CD4-positive, alpha-beta T cell (primary cell): ENCODE measurements at regions of chr2 and their contacts with region 1.

Region 1: DNA sequence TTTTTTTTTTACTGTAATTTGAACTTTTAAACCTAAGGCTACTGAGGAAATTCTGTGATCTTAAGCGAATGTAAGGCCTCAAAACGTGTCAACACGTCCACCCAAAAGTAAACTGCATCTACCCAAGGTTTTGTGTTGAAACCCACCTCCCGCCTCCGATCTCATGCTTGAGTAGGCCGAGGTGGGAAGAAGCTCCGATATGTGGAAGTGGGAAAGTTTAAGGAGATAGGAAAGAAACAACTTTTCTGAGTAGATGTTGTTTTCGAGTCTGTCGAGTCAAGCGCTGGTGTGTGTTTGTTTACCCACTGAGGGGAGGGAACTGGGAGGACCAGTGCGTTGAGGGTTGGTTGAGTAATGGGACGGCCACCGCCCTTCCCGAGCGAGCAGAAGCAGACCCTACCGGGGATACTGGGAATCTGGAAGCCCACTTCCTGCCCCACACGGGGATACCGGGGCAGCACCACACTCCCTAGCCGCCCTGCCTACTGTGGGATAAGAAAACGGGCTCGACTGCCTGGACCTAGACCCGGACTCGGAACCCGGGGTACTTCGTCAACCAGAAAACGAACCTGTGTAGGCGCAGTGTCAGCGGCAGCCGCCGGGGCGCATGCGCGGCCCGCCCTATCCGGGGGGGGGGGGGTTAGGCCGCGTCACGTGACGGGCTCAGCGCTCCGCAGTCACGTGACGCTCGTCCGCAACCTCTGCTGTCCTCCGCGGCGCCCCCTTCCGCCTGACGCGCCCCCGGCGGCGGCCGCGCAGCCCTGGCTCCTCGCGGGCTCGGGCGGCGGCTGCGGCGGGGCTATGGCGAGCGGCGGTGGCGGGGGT is at the start of gene RETREG2:
- DNase-seq: peak; percentile 67 to 96 (median 78)
- ATAC-seq: peak; percentile 66
- H3K4me3 ChIP-seq: peak within 1 kb of the TSS; percentile 90
- H3K4me3 Mint-ChIP-seq: peak within 1 kb of the TSS; percentile 94
- H3K27ac ChIP-seq: peak within 1 kb of the TSS; percentile 97 to 99
- H3K27ac Mint-ChIP-seq: peak within 1 kb of the TSS; percentile 99
- H3K4me1 ChIP-seq: peaks cover 89% of the 10 kb centered on the region
- H3K4me1 Mint-ChIP-seq: peaks cover 72% of the 10 kb centered on the region
- H3K27me3 ChIP-seq: no peaks in the 10 kb centered on the region
- H3K27me3 Mint-ChIP-seq: no peaks in the 10 kb centered on the region
- CTCF ChIP-seq: no peak
- total RNA-seq, gene RETREG2: 82.3 to 83.2 TPM

Region 2: GRCh38 chr2:218406209-218406948 is 771.4 kb before region 1 on chr2:
- CTCF ChIA-PET with region 1: no interaction called
- POLR2A ChIA-PET with region 1: no interaction called
- intact Hi-C with region 1: loop called in 1 of 2 experiments (anchors 10 kb)
- DNase-seq: peak; percentile 73 to 97 (median 94)
- ATAC-seq: peak; percentile 69
- H3K4me3 ChIP-seq: peak overlapping the region; percentile 59
- H3K4me3 Mint-ChIP-seq: peak overlapping the region; percentile 90
- H3K27ac ChIP-seq: peak overlapping the region; percentile 61 to 78
- H3K27ac Mint-ChIP-seq: peak overlapping the region; percentile 88
- H3K4me1 ChIP-seq: peaks cover 68% of the 10 kb centered on the region
- H3K4me1 Mint-ChIP-seq: peaks cover 57% of the 10 kb centered on the region
- H3K27me3 ChIP-seq: no peaks in the 10 kb centered on the region
- H3K27me3 Mint-ChIP-seq: no peaks in the 10 kb centered on the region
- CTCF ChIP-seq: peak; percentile 67

Region 3: DNA sequence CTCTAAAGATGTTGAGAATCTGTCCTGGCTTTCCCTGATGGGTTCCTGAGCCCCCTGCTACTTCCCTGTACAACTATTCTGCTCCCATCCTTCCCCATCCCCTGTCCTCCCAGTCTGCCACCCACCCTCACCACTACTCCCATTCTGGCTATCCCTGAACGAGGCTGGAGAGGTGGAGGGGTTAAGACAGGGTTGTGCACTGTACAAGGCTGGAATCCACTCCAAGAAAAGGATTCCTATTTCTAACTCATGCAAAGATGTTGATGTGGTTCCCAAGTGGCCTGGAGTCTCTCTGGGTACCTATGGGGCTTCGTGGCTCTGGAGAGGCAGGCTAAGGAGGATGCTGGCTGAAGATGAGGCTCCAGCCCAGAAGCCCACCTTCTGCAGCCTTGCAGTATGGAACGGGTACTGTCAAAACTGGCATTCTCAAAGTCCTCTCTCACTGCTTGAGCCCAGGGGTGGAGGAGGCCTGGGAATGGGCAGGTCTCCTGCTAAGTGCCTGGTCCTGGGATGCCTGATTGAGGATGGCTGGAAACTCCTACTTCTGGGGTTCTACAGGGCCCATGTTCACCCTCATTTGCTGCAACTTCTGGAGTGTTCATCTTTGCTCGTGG is 191.5 kb before region 1 on chr2:
- CTCF ChIA-PET with region 1: no interaction called
- POLR2A ChIA-PET with region 1: no interaction called
- intact Hi-C with region 1: no loop called
- DNase-seq: no peak
- ATAC-seq: no peak
- H3K4me3 ChIP-seq: no peak overlapping the region
- H3K4me3 Mint-ChIP-seq: no peak overlapping the region
- H3K27ac ChIP-seq: no peak overlapping the region
- H3K27ac Mint-ChIP-seq: no peak overlapping the region
- H3K4me1 ChIP-seq: peaks cover 37% of the 10 kb centered on the region
- H3K4me1 Mint-ChIP-seq: peaks cover 32% of the 10 kb centered on the region
- H3K27me3 ChIP-seq: peaks cover 88 to 96% of the 10 kb centered on the region in 2 experiments
- H3K27me3 Mint-ChIP-seq: peaks cover 93% of the 10 kb centered on the region
- CTCF ChIP-seq: no peak

Region 4: GRCh38 chr2:219160186-219161017 is 17.4 kb before region 1 on chr2 and contains the start of gene NHEJ1:
- CTCF ChIA-PET with region 1: interaction called, 19 read pairs
- POLR2A ChIA-PET with region 1: interaction called, 26 read pairs
- intact Hi-C with region 1: loop called in 1 of 2 experiments (anchors 1 kb)
- DNase-seq: peak; percentile 82 to 97 (median 90)
- ATAC-seq: peak; percentile 90
- H3K4me3 ChIP-seq: peak within 1 kb of the TSS; percentile 78
- H3K4me3 Mint-ChIP-seq: peak within 1 kb of the TSS; percentile 94
- H3K27ac ChIP-seq: peak within 1 kb of the TSS; percentile 52 to 77
- H3K27ac Mint-ChIP-seq: peak within 1 kb of the TSS; percentile 94
- H3K4me1 ChIP-seq: peaks cover 17% of the 10 kb centered on the region
- H3K4me1 Mint-ChIP-seq: peaks cover 24% of the 10 kb centered on the region
- H3K27me3 ChIP-seq: no peaks in the 10 kb centered on the region
- H3K27me3 Mint-ChIP-seq: no peaks in the 10 kb centered on the region
- CTCF ChIP-seq: peak; percentile 97
- total RNA-seq, gene NHEJ1: 7.2 to 8.5 TPM

Region 5: GRCh38 chr2:219218732-219219701 is 41.3 kb after region 1 on chr2 and contains the start of gene ABCB6:
- CTCF ChIA-PET with region 1: interaction called, 3 read pairs
- POLR2A ChIA-PET with region 1: interaction called, 16 read pairs
- intact Hi-C with region 1: no loop called
- DNase-seq: peak; percentile 67 to 93 (median 86)
- ATAC-seq: peak; percentile 92
- H3K4me3 ChIP-seq: peak within 1 kb of the TSS; percentile 70
- H3K4me3 Mint-ChIP-seq: peak within 1 kb of the TSS; percentile 85
- H3K27ac ChIP-seq: peak within 1 kb of the TSS in 1 of 2 donors; percentile 56
- H3K27ac Mint-ChIP-seq: peak within 1 kb of the TSS; percentile 78
- H3K4me1 ChIP-seq: peaks cover 26% of the 10 kb centered on the region
- H3K4me1 Mint-ChIP-seq: peaks cover 21% of the 10 kb centered on the region
- H3K27me3 ChIP-seq: no peaks in the 10 kb centered on the region
- H3K27me3 Mint-ChIP-seq: no peaks in the 10 kb centered on the region
- CTCF ChIP-seq: no peak
- total RNA-seq, gene ABCB6: 2.6 to 3.1 TPM

Region 6: GRCh38 chr2:219253753-219254590 is 76.2 kb after region 1 on chr2 and contains the start of gene TUBA4A:
- CTCF ChIA-PET with region 1: no interaction called
- POLR2A ChIA-PET with region 1: interaction called, 48 read pairs
- intact Hi-C with region 1: loop called (anchors 1 to 5 kb)
- DNase-seq: peak; percentile 83 to 95 (median 90)
- ATAC-seq: peak; percentile 71
- H3K4me3 ChIP-seq: peak within 1 kb of the TSS; percentile 88
- H3K4me3 Mint-ChIP-seq: peak within 1 kb of the TSS; percentile 88
- H3K27ac ChIP-seq: peak within 1 kb of the TSS; percentile 73 to 87
- H3K27ac Mint-ChIP-seq: peak within 1 kb of the TSS; percentile 96
- H3K4me1 ChIP-seq: peaks cover 49% of the 10 kb centered on the region
- H3K4me1 Mint-ChIP-seq: peaks cover 49% of the 10 kb centered on the region
- H3K27me3 ChIP-seq: no peaks in the 10 kb centered on the region
- H3K27me3 Mint-ChIP-seq: no peaks in the 10 kb centered on the region
- CTCF ChIP-seq: no peak
- total RNA-seq, gene TUBA4A: 183 to 185 TPM

Region 7: DNA sequence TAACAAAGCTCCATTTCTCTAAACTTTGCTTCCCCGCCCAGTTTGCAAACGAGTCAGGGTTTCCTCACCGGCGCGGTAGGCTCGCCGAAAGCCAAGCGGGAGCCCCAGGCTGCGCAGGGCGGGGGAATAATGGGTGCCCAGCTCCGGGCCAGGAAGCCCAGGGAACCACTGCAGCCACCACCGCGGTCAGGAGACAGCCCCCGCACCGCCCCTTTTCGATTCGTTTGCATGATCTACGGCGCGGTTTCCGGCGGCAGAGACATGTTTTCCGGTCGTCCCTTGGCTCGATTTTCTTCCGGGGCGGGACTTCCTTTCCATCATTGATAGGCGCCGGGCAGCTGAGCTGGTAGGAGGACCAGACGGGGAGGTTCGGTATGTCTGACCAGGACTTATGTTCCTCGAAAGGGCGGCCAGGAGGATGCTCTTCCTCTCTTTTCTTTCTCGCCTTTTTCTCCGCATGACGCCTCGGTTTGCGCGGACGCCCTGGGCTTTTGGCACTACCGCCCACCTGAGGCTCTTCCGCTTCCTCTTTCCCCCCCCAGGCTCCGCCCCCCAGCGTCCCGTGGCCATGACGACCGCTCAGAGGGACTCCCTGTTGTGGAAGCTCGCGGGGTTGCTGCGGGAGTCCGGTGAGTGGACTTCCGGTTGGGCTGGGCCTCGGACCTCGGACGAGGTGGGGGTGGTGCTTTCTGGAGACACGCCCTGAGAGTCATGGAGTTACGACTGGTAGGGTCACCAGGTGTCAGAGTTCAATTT is 420.0 kb after region 1 on chr2 and contains the start of gene STK11IP:
- CTCF ChIA-PET with region 1: no interaction called
- POLR2A ChIA-PET with region 1: no interaction called
- intact Hi-C with region 1: loop called in 1 of 2 experiments (anchors 10 kb)
- DNase-seq: peak; percentile 75 to 95 (median 84)
- ATAC-seq: peak; percentile 85
- H3K4me3 ChIP-seq: peak within 1 kb of the TSS; percentile 73
- H3K4me3 Mint-ChIP-seq: peak within 1 kb of the TSS; percentile 98
- H3K27ac ChIP-seq: peak within 1 kb of the TSS; percentile 70 to 79
- H3K27ac Mint-ChIP-seq: peak within 1 kb of the TSS; percentile 94
- H3K4me1 ChIP-seq: peaks cover 13% of the 10 kb centered on the region
- H3K4me1 Mint-ChIP-seq: peaks cover 24% of the 10 kb centered on the region
- H3K27me3 ChIP-seq: no peaks in the 10 kb centered on the region
- H3K27me3 Mint-ChIP-seq: peaks cover 7% of the 10 kb centered on the region
- CTCF ChIP-seq: no peak
- total RNA-seq, gene STK11IP: 23.9 to 27.2 TPM